Transverse colon (tissue), 4 donors: ENCODE measurements at regions of chr3 and their contacts with region 1.

Region 1: DNA sequence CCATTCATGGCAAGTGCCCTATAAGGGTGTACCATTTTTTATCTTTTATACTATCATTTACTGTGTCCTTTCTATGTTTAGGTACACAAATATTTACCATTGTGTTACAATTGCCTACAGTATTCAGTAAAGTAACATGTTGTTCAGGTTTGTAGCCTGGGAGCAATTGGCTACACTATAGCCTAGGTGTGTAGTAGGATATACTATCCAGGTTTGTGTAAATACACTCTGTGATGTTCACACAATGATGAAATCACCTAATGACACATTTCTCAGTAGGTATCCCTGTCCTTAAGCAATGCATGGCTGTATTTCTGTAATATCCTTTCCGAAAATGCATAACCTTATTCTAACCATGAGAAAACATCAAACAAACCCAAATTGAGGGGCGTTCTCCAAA is 17.9 kb upstream of the CNOT10 start:
- DNase-seq: no peak
- H3K4me3 ChIP-seq: no peak overlapping the region
- H3K27ac ChIP-seq: no peak overlapping the region
- H3K4me1 ChIP-seq: no peaks in the 10 kb centered on the region
- H3K27me3 ChIP-seq: no peaks in the 10 kb centered on the region
- CTCF ChIP-seq: no peak
- EP300 ChIP-seq: no peak
- POLR2A ChIP-seq: no peak

Region 2: GRCh38 chr3:32177702-32178198 is 489.4 kb before region 1 on chr3:
- in situ Hi-C with region 1: loop called in 3 of 4 experiments (anchors 25 kb)
- intact Hi-C with region 1: no loop called
- DNase-seq: peak; percentile 67
- H3K4me3 ChIP-seq: no peak overlapping the region
- H3K27ac ChIP-seq: no peak overlapping the region
- H3K4me1 ChIP-seq: no peaks in the 10 kb centered on the region
- H3K27me3 ChIP-seq: no peaks in the 10 kb centered on the region
- CTCF ChIP-seq: peak; percentile 46 to 69 (median 56)
- EP300 ChIP-seq: no peak
- POLR2A ChIP-seq: no peak

Region 3: DNA sequence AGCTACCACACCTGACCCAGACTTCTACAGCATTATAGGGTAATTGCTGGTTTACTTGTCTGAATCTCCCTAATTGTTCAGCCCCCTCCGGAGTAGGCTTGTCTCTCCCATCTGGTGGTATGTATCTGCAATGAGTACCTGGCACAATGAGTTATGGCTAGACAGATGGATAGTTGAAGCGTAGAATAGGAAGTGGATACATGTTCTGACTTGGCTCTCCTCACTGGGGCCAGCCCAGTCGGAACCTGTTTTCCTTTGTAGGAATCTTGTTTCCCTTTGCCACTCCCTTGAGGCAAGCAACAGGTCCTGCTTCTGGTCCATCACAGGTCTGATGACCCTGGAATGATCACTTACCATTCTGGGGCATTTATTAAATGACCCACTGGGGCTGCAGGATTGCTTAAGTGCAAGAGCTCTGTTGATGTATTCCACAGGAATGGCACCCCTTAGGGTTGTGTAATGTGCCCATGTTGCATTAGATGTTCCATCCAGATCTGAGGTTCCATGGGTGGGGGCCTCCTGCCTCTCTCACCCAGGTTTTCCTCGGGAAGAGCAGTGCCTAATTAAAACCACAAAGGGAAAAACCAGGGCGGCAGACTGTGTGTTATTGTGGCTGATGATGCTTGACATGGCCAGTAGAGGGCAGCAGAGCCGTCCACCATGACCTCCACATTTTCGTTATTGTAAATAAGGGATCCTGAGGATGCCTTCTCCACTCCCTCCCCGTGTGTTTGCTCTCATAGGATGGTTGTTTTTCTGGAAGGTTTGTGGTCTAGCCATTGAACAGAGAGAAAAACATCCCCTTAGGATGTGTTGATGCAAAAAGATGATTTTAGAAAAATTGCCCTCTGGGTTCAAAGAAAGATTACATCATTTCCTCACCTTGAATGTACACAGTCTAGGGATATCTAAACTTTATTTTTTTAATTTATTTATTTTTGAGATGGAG is 370.6 kb before region 1 on chr3:
- in situ Hi-C with region 1: loop called in 1 of 4 experiments (anchors 25 kb)
- intact Hi-C with region 1: no loop called
- DNase-seq: peak; percentile 63
- H3K4me3 ChIP-seq: no peak overlapping the region
- H3K27ac ChIP-seq: no peak overlapping the region
- H3K4me1 ChIP-seq: no peaks in the 10 kb centered on the region
- H3K27me3 ChIP-seq: no peaks in the 10 kb centered on the region
- CTCF ChIP-seq: peak; percentile 77 to 89 (median 83)
- EP300 ChIP-seq: no peak
- POLR2A ChIP-seq: no peak

Region 4: GRCh38 chr3:32374788-32375595 is 292.1 kb before region 1 on chr3:
- in situ Hi-C with region 1: loop called in 1 of 4 experiments (anchors 25 kb)
- intact Hi-C with region 1: no loop called
- DNase-seq: peak; percentile 63
- H3K4me3 ChIP-seq: no peak overlapping the region
- H3K27ac ChIP-seq: no peak overlapping the region
- H3K4me1 ChIP-seq: no peaks in the 10 kb centered on the region
- H3K27me3 ChIP-seq: no peaks in the 10 kb centered on the region
- CTCF ChIP-seq: peak; percentile 68 to 76 (median 71)
- EP300 ChIP-seq: no peak
- POLR2A ChIP-seq: no peak

Region 5: GRCh38 chr3:32502118-32502945 is 164.8 kb before region 1 on chr3 and contains the start of gene CMTM6:
- in situ Hi-C with region 1: loop called in 2 of 4 experiments (anchors 5 to 10 kb)
- intact Hi-C with region 1: loop called (anchors 5 kb)
- DNase-seq: peak; percentile 87
- H3K4me3 ChIP-seq: peak within 1 kb of the TSS; percentile 75 to 99 (median 92)
- H3K27ac ChIP-seq: peak within 1 kb of the TSS; percentile 95 to 100 (median 99)
- H3K4me1 ChIP-seq: peaks cover 4 to 35% (median 23%) of the 10 kb centered on the region in 4 donors
- H3K27me3 ChIP-seq: no peaks in the 10 kb centered on the region
- CTCF ChIP-seq: no peak
- EP300 ChIP-seq: no peak
- POLR2A ChIP-seq: peak; percentile 53
- total RNA-seq, gene CMTM6: 13.8 to 68.9 (median 43.6) TPM

Region 6: GRCh38 chr3:32510075-32510724 is 156.9 kb before region 1 on chr3:
- in situ Hi-C with region 1: loop called in 3 of 4 experiments (anchors 5 to 10 kb)
- intact Hi-C with region 1: loop called (anchors 5 kb)
- DNase-seq: peak; percentile 67
- H3K4me3 ChIP-seq: no peak overlapping the region
- H3K27ac ChIP-seq: no peak overlapping the region
- H3K4me1 ChIP-seq: peaks cover 0 to 4% (median 1%) of the 10 kb centered on the region in 4 donors
- H3K27me3 ChIP-seq: no peaks in the 10 kb centered on the region
- CTCF ChIP-seq: peak; percentile 59 to 84 (median 63)
- EP300 ChIP-seq: no peak
- POLR2A ChIP-seq: no peak